A673 (cell line): ENCODE measurements at regions of chr1 and their contacts with region 1.

Region 1: DNA sequence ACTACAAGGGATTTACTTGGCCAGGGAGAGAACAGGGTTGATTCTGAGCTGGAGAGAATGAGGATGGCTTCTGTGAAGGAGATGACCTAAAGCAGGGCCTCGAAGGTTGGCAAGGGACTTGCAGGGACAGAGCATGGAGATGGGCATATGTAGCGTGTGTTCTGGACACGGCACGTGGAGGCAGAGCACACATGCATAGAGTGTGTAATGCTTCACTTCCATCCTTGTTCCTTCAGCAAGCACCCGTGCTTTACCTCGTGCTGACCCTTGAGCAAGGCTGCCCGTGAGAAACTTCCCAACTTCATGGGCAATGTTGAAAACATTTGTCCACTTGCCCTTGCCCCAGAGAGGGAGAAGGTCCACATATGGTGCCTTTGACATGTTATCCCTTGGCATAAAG is 33.1 kb downstream of the NFIA start:
- DNase-seq: no peak
- H3K4me3 ChIP-seq: no peak overlapping the region
- H3K27ac ChIP-seq: peak overlapping the region; percentile 27
- H3K4me1 ChIP-seq: peaks cover 78% of the 10 kb centered on the region
- H3K27me3 ChIP-seq: no peaks in the 10 kb centered on the region
- CTCF ChIP-seq: no peak

Region 2: GRCh38 chr1:61241411-61241838 is 126.0 kb after region 1 on chr1:
- CTCF ChIA-PET with region 1: no interaction called
- POLR2A ChIA-PET with region 1: interaction called, 10 read pairs
- intact Hi-C with region 1: no loop called
- DNase-seq: no peak
- H3K4me3 ChIP-seq: no peak overlapping the region
- H3K27ac ChIP-seq: no peak overlapping the region
- H3K4me1 ChIP-seq: peaks cover 57% of the 10 kb centered on the region
- H3K27me3 ChIP-seq: no peaks in the 10 kb centered on the region
- CTCF ChIP-seq: no peak